Stomach (tissue), 19 donors: ENCODE measurements at regions of chr12 and their contacts with region 1.

Region 1: DNA sequence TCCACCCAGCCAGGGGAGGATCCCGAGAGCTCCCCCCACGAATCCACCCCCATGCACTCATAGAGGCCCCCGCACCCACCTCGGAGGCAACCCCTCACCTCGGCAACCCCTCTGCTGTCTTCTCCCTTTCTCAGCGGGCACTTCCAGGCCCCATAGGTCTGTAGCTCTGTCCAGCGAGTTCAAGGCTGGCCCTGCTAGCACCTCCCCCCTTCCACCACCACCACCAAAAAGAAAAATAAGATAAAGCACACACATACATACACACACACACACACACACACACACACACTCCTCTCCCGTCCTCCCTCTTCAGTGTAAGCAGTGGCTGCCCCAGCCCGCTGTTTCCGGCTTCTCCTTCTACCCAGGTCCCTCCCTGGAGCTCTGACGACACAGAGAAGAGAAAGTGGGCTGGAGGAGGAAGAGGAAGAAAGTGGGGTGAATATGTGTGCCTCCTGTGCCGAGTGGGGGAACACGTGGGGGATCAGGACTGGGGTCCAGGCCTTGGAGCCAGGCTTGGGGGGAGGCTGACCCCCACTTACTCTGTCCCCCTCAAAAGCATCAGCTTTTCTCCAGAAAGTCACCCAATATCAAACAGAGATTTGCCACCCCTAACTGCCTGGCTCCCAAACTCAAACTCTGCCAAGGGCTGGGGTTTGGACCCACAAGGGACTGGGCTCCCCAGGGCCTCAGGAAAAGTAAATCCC is at the start of gene STAT6:
- DNase-seq: peak; percentile 87 to 95
- H3K4me3 ChIP-seq: peak within 1 kb of the TSS; percentile 68 to 85 (median 82)
- H3K27ac ChIP-seq: peak within 1 kb of the TSS; percentile 97 to 100 (median 97)
- H3K4me1 ChIP-seq: peaks cover 26 to 52% (median 47%) of the 10 kb centered on the region in 4 donors
- H3K27me3 ChIP-seq: no peaks in the 10 kb centered on the region
- CTCF ChIP-seq: no peak
- EP300 ChIP-seq: no peak
- POLR2A ChIP-seq: peak in 1 of 4 donors; percentile 77
- total RNA-seq, gene STAT6: 81.9 to 343 (median 209) TPM

Region 2: DNA sequence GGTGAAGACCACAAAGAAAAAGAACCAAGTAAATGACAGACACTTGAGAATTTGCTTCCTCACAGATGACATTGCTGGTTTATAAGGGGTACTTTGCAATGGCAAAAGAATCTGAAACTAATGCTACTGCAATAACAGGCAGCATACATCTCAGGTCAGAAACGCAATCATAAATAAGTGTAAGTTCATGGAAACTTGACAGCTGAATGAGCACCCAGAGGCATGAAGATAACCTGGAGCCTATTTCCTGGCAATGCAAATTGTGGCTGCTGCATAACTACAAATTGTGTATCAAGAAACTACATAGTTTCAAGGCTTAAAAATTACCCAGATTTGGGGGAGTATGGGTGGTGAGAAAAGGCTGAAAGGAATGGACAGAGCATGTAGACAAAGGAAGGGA is 52.7 kb before region 1 on chr12:
- intact Hi-C with region 1: no loop called
- DNase-seq: no peak
- H3K4me3 ChIP-seq: no peak overlapping the region
- H3K27ac ChIP-seq: no peak overlapping the region
- H3K4me1 ChIP-seq: peaks cover 0 to 10% (median 2%) of the 10 kb centered on the region in 4 donors
- H3K27me3 ChIP-seq: no peaks in the 10 kb centered on the region
- CTCF ChIP-seq: no peak
- EP300 ChIP-seq: no peak
- POLR2A ChIP-seq: no peak

Region 3: GRCh38 chr12:57069523-57069922 is 41.7 kb before region 1 on chr12:
- intact Hi-C with region 1: loop called (anchors 5 kb)
- DNase-seq: peak; percentile 60 to 93
- H3K4me3 ChIP-seq: no peak overlapping the region
- H3K27ac ChIP-seq: peak overlapping the region; percentile 16 to 79 (median 77)
- H3K4me1 ChIP-seq: peaks cover 0 to 34% (median 17%) of the 10 kb centered on the region in 4 donors
- H3K27me3 ChIP-seq: no peaks in the 10 kb centered on the region
- CTCF ChIP-seq: peak in 5 of 7 experiments; percentile 76 to 96 (median 86)
- EP300 ChIP-seq: no peak
- POLR2A ChIP-seq: no peak